Activated CD4-positive, alpha-beta T cell treated with anti-CD3 and anti-CD28 coated beads for 36 hours (primary cell): ENCODE measurements at regions of chr3 and their contacts with region 1.

Region 1: DNA sequence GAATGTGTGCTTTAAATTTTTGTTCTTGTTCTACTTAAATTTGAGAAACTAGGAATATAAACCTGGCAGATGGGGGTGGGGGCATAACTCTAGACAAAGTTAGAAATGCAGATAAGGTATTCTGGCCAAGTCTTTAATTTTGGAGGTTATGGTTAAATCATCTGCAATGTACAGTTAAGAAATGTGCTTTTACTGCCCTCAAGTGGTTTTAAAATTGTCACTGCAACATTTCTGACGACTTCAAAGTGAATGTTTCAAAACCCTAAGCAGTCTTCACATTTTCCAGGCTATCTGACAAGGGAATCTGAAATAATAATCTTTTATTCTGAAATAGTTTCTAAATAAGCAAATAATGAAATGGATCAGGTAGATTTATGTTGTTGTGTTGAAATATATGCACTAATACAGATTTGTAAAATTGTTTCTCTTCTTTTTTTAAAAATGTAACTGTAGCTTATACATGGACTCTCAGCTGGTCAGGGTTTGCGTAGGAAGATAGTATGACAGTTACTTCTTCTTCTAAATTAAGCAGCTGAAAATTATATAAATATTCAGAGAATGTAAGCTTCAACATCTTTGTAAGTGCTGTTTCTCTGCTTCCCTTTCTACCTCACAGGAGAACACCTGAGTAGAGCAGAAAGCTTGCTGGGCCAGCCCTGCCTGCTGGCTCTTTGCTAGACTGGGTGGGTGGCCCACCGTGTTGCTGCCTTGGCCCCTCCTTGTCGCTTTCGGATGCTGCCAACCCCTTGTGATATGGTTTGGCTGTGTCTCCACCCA is 45.0 kb downstream of the SUCNR1 start:
- DNase-seq: no peak
- ATAC-seq: no peak
- H3K4me3 Mint-ChIP-seq: no peak overlapping the region
- H3K27ac Mint-ChIP-seq: no peak overlapping the region
- H3K4me1 Mint-ChIP-seq: no peaks in the 10 kb centered on the region
- H3K27me3 Mint-ChIP-seq: no peaks in the 10 kb centered on the region

Region 2: GRCh38 chr3:151290673-151291072 is 627.8 kb before region 1 on chr3:
- CTCF ChIA-PET with region 1: no interaction called
- POLR2A ChIA-PET with region 1: no interaction called
- intact Hi-C with region 1: loop called in 1 of 2 experiments (anchors 2 kb)
- DNase-seq: no peak
- ATAC-seq: no peak
- H3K4me3 Mint-ChIP-seq: no peak overlapping the region
- H3K27ac Mint-ChIP-seq: no peak overlapping the region
- H3K4me1 Mint-ChIP-seq: peaks cover 4% of the 10 kb centered on the region
- H3K27me3 Mint-ChIP-seq: no peaks in the 10 kb centered on the region

Region 3: DNA sequence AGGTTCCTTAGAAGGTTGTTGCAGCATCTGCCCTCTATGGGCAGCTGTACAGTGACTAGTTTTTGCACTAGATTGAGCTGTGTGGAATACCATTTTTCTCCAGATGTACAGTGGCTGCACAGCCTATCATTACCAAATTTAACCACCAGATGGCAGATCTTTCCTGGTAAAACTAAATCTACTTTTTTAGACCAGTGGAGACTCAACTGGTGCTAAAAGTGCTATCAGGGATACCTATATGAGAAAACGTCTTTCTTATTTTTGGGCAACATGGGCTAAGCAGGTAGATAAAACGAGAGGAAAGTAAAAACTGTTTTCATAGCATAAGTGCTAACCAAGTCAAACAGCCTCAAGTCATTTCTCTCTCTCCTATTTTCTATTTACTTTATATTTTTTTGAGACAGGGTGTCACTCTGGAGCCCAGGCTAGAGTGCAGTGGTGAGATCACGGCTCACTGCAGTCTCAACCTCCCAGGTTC is 478.8 kb before region 1 on chr3:
- CTCF ChIA-PET with region 1: interaction called, 11 read pairs
- POLR2A ChIA-PET with region 1: no interaction called
- intact Hi-C with region 1: loop called (anchors 1 to 2 kb)
- DNase-seq: no peak
- ATAC-seq: peak; percentile 58
- H3K4me3 Mint-ChIP-seq: no peak overlapping the region
- H3K27ac Mint-ChIP-seq: no peak overlapping the region
- H3K4me1 Mint-ChIP-seq: no peaks in the 10 kb centered on the region
- H3K27me3 Mint-ChIP-seq: no peaks in the 10 kb centered on the region

Region 4: GRCh38 chr3:151468284-151468917 is 450.0 kb before region 1 on chr3:
- CTCF ChIA-PET with region 1: interaction called, 6 read pairs
- POLR2A ChIA-PET with region 1: no interaction called
- intact Hi-C with region 1: loop called (anchors 1 to 10 kb)
- DNase-seq: peak; percentile 46
- ATAC-seq: peak; percentile 70
- H3K4me3 Mint-ChIP-seq: no peak overlapping the region
- H3K27ac Mint-ChIP-seq: no peak overlapping the region
- H3K4me1 Mint-ChIP-seq: no peaks in the 10 kb centered on the region
- H3K27me3 Mint-ChIP-seq: peaks cover 2% of the 10 kb centered on the region

Region 5: GRCh38 chr3:152026033-152026556 is 107.7 kb after region 1 on chr3:
- CTCF ChIA-PET with region 1: no interaction called
- POLR2A ChIA-PET with region 1: no interaction called
- intact Hi-C with region 1: no loop called
- DNase-seq: no peak
- ATAC-seq: no peak
- H3K4me3 Mint-ChIP-seq: no peak overlapping the region
- H3K27ac Mint-ChIP-seq: no peak overlapping the region
- H3K4me1 Mint-ChIP-seq: peaks cover 10% of the 10 kb centered on the region
- H3K27me3 Mint-ChIP-seq: peaks cover 2% of the 10 kb centered on the region

Region 6: GRCh38 chr3:152524198-152525140 is 606.0 kb after region 1 on chr3:
- CTCF ChIA-PET with region 1: interaction called, 3 read pairs
- POLR2A ChIA-PET with region 1: no interaction called
- intact Hi-C with region 1: loop called in 1 of 2 experiments (anchors 2 kb)
- DNase-seq: peak; percentile 63
- ATAC-seq: peak; percentile 58
- H3K4me3 Mint-ChIP-seq: no peak overlapping the region
- H3K27ac Mint-ChIP-seq: no peak overlapping the region
- H3K4me1 Mint-ChIP-seq: no peaks in the 10 kb centered on the region
- H3K27me3 Mint-ChIP-seq: no peaks in the 10 kb centered on the region